GM10248 (cell line): ENCODE measurements at regions of chr14 and their contacts with region 1.

Region 1: GRCh38 chr14:88013750-88014349 is 8.9 kb downstream of the GPR65 start:
- DNase-seq: peak; percentile 40
- CTCF ChIP-seq: peak; percentile 68

Region 2: GRCh38 chr14:87994974-87995373 is 18.9 kb before region 1 on chr14:
- CTCF ChIA-PET with region 1: interaction called, 16 read pairs
- POLR2A ChIA-PET with region 1: interaction called, 3 read pairs
- DNase-seq: peak; percentile 28
- CTCF ChIP-seq: no peak

Region 3: GRCh38 chr14:88026890-88027289 is 13.0 kb after region 1 on chr14:
- CTCF ChIA-PET with region 1: interaction called, 10 read pairs
- POLR2A ChIA-PET with region 1: interaction called, 3 read pairs
- DNase-seq: no peak
- CTCF ChIP-seq: no peak

Region 4: DNA sequence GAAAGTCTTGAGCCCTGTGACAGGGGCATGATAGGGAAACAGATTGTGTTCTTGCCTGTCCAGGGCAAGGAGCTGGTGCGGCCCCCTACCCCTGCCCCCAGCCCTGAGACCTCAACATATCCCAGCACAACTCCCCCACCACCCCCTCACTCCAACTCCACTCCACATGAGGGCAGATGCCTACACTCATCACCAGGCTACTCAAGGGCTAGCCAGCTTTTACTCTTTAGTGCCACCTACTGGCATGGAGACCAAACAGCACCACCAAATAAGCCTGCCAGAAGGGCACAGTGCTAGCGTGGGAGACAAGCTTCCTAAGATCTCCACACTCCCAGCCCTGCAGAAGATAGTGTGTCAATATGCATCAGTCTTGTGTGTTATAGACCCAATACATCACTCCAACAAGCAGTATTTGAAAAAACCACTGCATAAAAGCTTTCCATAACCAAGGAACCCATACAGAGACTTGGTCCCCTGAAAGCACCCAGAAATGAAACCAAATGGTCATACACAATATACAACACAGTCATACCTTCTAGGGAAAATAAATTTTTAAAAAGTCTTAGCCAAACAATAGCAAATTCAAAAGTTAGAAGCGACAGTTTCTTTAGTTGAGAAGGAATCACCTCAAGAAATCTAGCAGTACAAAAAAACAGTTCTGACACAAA is 154.8 kb after region 1 on chr14:
- CTCF ChIA-PET with region 1: interaction called, 37 read pairs
- POLR2A ChIA-PET with region 1: no interaction called
- DNase-seq: peak; percentile 63
- CTCF ChIP-seq: peak; percentile 77

Region 5: DNA sequence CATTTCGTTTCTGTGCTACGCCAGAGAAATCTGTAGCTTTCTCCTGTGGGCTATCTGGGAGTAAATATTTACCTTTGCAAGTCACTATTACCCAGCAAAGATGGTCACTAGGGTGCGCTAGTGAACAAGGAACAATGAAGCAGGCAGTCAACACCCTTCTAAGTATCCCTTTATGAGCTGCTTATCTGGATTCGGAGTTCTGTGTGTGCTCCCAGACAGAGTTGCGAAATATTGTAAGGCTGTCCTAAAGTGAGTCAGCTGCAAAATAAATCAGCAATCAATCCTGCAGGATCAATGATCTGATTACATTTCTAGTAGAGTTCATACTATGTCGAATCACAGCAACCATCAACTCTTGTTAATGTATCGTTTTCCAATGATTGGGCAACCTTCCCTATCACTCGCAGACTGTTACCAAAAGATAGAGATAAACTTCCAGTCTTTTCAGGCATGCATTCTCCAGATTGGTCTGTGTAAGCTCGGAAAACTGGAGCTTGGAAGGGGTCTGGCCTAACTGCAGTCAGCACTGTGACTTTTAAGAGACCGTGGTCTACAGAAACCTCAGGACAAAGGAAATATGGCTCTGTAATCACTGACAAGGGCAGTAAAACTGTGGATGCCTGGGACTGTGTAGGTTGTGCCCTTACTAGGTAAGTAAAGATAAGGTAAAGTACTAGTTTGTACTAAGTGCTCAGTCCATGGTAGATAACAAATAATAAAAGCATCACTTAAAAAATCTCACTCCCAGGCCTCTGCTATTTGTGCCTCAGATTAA is 175.8 kb after region 1 on chr14:
- CTCF ChIA-PET with region 1: interaction called, 13 read pairs
- POLR2A ChIA-PET with region 1: no interaction called
- DNase-seq: peak; percentile 58
- CTCF ChIP-seq: peak; percentile 70